Psoas muscle (tissue), 8 donors: ENCODE measurements at regions of chr12 and their contacts with region 1.

Region 1: GRCh38 chr12:76621582-76622024 is 62.0 kb upstream of the OSBPL8 start:
- DNase-seq: peak; percentile 30 to 66
- ATAC-seq: peak; percentile 88 to 95 (median 92)
- H3K4me3 ChIP-seq: no peak overlapping the region
- H3K27ac ChIP-seq: no peak overlapping the region
- H3K4me1 ChIP-seq: no peaks in the 10 kb centered on the region
- H3K27me3 ChIP-seq: no peaks in the 10 kb centered on the region
- CTCF ChIP-seq: peak; percentile 97

Region 2: DNA sequence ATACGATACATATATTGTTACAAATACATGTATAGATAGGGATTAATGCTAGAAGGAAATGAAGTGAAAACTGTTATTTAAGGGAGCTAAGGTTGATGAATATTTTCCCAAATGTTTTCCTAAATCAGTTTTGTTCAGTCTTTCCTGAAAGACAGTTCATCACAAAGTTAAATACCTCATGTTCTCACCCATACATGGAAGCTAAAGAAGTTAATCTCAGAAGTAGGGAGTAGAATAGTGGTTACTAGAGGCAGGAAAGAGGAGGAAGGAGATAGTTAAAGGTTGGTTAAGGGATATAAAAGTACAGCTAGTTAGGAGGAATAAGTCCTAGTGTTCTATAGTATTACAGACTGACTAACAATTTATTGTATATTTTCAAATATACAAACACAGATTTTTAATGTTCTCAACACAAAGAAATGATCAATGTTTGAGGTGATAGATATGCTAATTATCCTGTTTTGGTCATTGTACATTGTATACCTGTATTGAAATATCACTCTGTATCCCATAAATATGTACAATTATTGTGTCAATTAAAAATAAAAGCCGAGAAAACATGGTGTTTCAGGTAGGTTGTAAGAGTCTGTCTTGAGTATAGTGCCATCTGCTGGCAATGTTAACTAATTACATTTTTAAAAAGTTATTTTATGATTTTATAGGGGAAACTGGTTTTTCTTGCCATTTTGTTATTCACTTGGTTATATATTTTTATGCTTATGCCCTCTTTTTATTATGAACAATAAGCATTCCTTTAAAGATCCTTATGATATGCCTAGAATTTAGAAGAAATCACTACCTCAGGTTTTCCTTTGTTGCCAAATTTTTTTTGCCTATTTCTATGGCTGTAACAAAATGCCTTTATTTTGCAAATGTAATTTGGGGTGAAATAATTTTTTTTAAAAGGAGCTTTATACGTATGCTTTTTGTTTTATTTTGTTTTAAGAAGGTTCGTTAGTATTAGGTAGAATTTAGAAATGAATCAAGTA is 169.3 kb after region 1 on chr12:
- intact Hi-C with region 1: loop called (anchors 2 to 5 kb)
- DNase-seq: no peak
- ATAC-seq: peak in 3 of 4 donors; percentile 50 to 75 (median 65)
- H3K4me3 ChIP-seq: no peak overlapping the region
- H3K27ac ChIP-seq: peak overlapping the region; percentile 30
- H3K4me1 ChIP-seq: peaks cover 45% of the 10 kb centered on the region
- H3K27me3 ChIP-seq: no peaks in the 10 kb centered on the region
- CTCF ChIP-seq: peak; percentile 84

Region 3: GRCh38 chr12:77010691-77011548 is 389.3 kb after region 1 on chr12:
- intact Hi-C with region 1: loop called (anchors 2 to 5 kb)
- DNase-seq: peak; percentile 61 to 80
- ATAC-seq: peak; percentile 53 to 80 (median 71)
- H3K4me3 ChIP-seq: no peak overlapping the region
- H3K27ac ChIP-seq: no peak overlapping the region
- H3K4me1 ChIP-seq: peaks cover 4% of the 10 kb centered on the region
- H3K27me3 ChIP-seq: no peaks in the 10 kb centered on the region
- CTCF ChIP-seq: peak; percentile 88

Region 4: DNA sequence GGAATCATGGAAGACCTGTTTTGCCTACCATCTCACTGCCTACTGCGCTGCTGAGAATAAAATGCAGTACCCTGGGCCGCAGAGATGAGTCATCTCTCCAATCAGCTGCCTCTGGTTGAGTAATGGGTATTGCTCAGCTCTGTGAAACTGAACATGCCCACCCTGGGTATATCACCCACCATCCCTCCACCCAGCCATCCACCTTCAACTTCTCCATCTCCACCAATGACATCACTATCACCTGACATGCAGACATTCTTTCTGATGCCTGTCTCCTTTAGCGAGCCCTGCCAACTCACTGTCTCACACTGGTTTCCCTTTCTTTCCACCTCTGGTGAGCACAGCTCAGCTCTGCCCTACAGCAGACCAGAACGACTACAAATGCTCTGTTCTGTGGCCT is 410.1 kb after region 1 on chr12:
- intact Hi-C with region 1: no loop called
- DNase-seq: no peak
- ATAC-seq: no peak
- H3K4me3 ChIP-seq: no peak overlapping the region
- H3K27ac ChIP-seq: no peak overlapping the region
- H3K4me1 ChIP-seq: no peaks in the 10 kb centered on the region
- H3K27me3 ChIP-seq: no peaks in the 10 kb centered on the region
- CTCF ChIP-seq: no peak

Region 5: DNA sequence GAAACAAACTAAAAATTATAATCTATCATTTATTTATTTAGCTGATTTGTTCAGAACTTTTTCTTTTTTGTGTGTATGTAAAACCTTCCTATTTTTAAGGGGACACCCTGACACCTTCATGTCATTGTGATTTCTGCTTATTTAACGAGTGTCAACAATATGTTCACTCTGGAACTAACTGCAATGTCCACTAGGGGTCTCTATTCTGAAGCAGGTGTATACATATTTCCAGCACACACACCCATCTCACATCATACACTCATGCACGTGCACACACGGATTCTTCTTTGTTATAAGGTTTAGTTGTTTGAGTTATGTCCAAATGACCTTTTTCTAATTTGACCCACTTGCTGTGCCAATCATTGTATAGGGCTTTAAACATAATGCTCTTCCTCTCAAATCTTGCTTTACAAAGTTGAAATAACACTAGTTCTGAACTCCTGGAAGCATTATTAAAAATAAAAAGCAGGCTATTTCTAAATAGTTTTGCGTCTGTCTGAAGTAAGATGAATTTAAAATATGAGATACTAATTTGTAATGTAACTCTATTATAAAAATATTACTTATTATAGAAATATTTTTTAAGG is 428.3 kb after region 1 on chr12:
- intact Hi-C with region 1: no loop called
- DNase-seq: no peak
- ATAC-seq: peak in 2 of 4 donors; percentile 50 to 56
- H3K4me3 ChIP-seq: no peak overlapping the region
- H3K27ac ChIP-seq: no peak overlapping the region
- H3K4me1 ChIP-seq: no peaks in the 10 kb centered on the region
- H3K27me3 ChIP-seq: no peaks in the 10 kb centered on the region
- CTCF ChIP-seq: peak; percentile 68